ENCODE measurements at regions of chr13 and their contacts with region 1.

Region 1: GRCh38 chr13:48769107-48769704 is 115.5 kb downstream of the CYSLTR2 start:
- DNase-seq: peak; percentile 82
- ATAC-seq: peak; percentile 97
- H3K4me3 ChIP-seq: no peak overlapping the region
- H3K27ac ChIP-seq: no peak overlapping the region
- H3K4me1 ChIP-seq: no peaks in the 10 kb centered on the region
- H3K27me3 ChIP-seq: no peaks in the 10 kb centered on the region
- CTCF ChIP-seq: peak; percentile 98
- EP300 ChIP-seq: no peak
- POLR2A ChIP-seq: no peak
- RAD21 ChIP-seq: peak; percentile 96

Region 2: DNA sequence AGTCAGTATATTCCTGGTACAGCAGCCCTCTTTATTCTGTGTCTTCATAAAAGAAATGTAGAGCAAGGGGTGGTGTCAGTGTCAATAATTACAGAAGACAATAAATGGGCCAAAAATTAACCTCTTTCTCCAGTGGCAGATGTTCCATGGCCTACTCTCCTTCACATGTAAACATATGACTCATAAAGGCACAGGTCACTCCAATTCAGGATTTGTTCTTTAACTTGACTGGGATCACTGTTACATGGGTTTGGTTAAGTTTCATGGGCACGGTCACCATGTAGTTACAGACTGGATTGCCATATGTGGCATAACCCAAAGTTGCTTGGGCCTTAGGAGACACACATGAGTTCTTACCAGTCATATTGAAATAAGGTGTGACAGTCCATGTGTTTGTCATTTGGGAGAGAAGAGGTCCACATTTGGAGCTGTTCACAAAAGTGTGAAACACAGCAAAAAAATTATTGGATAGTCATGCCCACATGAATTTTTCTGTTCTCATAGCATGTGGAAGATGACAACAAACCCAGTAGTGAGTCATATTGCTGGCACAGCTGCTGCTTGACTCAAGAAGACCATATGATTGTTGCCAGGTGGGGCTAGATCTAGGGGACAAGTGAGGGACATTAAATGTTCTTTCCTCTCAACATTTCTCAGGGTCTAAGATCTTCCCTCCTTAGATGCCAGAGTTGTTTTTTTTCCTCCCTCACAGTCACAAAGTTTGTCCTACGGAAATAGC is 1804.2 kb before region 1 on chr13:
- CTCF ChIA-PET with region 1: no interaction called
- POLR2A ChIA-PET with region 1: no interaction called
- in situ Hi-C with region 1: no loop called
- intact Hi-C with region 1: loop called (anchors 5 kb)
- DNase-seq: no peak
- ATAC-seq: no peak
- H3K4me3 ChIP-seq: no peak overlapping the region
- H3K27ac ChIP-seq: no peak overlapping the region
- H3K4me1 ChIP-seq: no peaks in the 10 kb centered on the region
- H3K27me3 ChIP-seq: no peaks in the 10 kb centered on the region
- CTCF ChIP-seq: no peak
- EP300 ChIP-seq: no peak
- POLR2A ChIP-seq: no peak
- RAD21 ChIP-seq: no peak

Region 3: GRCh38 chr13:48303359-48304142 is 465.7 kb before region 1 on chr13 and contains the start of gene RB1:
- CTCF ChIA-PET with region 1: no interaction called
- POLR2A ChIA-PET with region 1: no interaction called
- in situ Hi-C with region 1: loop called (anchors 25 kb)
- intact Hi-C with region 1: no loop called
- DNase-seq: peak; percentile 80
- ATAC-seq: peak; percentile 92
- H3K4me3 ChIP-seq: peak within 1 kb of the TSS; percentile 79 to 91 (median 91)
- H3K27ac ChIP-seq: peak within 1 kb of the TSS; percentile 94
- H3K4me1 ChIP-seq: peaks cover 20% of the 10 kb centered on the region
- H3K27me3 ChIP-seq: no peaks in the 10 kb centered on the region; a peak in 1 of 5 replicates
- CTCF ChIP-seq: 0 out of 2 replicates have a peak, but pooled peaks have one; percentile 2
- EP300 ChIP-seq: 0 out of 4 replicates have a peak, but pooled peaks of 1 of the 2 experiments have one; percentile 24
- POLR2A ChIP-seq: peak; percentile 73 to 82
- RAD21 ChIP-seq: peak; percentile 13
- total RNA-seq, gene RB1: 23.7 and 35.7 TPM in 2 replicates

Region 4: DNA sequence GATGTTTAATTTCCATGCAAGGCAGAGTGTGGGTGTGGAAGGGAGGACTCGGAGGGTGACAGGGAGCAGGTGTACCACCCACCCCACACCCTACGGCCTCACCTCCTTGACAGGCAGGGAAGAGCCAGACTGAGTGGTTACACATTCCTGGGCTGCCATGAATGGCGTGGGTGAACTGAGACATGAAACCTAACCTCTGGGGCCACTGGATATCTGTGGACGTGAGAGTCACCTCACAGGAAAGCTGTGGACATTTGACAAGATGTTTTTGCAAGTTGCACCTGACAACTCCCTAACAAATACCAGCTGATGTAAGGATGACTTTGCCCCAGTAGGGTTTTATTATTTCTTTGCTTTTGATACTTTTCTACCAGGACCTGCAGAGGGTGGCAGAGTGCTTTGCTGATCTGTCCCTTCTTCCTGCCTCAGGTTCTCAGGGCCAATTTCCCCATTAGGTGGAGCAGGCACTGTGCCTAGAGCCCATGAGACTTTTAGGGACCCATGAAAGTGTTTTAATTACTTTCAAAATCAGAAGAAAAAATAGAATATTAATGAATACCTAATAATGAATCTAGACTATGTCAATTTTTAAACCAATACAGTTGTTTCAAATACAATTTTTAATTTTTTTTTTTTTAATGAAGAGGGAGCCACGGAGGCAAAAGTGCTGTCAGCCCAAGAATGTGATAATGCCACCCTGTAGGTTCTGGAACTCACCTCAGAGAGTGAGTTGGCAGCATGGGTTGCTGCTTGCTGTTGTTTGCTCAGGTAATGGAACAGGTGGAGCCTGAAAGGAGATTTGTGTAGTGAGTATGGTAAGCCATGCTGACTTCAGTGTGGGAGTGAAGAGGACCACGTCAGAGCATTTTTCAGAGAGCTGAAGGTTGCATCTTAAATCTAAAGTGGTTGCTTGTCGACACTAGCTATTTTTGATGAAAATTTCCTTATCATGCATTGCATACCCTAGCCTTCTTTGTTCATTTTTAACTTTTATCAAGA is 173.5 kb before region 1 on chr13:
- CTCF ChIA-PET with region 1: interaction called, 144 read pairs
- POLR2A ChIA-PET with region 1: no interaction called
- in situ Hi-C with region 1: loop called (anchors 5 kb)
- intact Hi-C with region 1: loop called (anchors 1 kb)
- DNase-seq: peak; percentile 79
- ATAC-seq: peak; percentile 94
- H3K4me3 ChIP-seq: no peak overlapping the region
- H3K27ac ChIP-seq: no peak overlapping the region
- H3K4me1 ChIP-seq: peaks cover 56% of the 10 kb centered on the region
- H3K27me3 ChIP-seq: no peaks in the 10 kb centered on the region
- CTCF ChIP-seq: peak; percentile 87
- EP300 ChIP-seq: no peak
- POLR2A ChIP-seq: no peak
- RAD21 ChIP-seq: peak; percentile 84

Region 5: DNA sequence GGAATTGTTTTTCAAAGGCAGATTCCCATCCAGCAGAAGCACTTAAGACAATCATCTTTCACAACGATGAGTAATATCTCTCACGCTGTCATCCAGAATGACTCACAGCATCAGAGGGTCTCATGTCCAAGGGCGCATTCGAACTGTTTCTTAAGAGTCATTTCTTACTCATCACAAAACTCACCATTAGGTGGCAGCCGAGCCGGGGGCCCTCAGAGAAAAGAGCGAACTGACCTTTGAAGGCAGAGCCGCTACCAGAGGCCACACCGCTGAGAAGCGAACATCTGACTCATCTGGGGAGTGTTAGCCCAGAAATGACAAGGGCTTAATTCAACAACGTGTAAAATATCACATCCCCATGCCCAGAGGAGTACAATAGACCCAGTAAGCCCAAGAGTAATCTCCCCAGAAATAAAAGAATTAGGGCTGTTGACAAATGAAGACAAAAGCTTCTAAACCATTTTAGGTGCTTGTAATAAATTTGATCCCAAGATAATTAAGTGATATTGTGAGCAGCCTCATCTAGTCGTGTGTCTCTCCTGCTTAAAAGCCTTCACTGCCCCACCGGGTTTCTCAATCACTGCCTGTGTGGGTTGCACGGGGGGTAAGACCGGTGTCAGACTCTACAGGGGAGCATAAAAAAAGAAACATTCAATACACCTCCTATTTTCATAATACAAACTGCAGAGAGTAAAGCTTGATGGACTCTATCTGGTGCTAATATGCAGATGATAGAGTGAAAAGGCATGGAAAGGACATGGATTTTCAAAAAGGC is 19.3 kb before region 1 on chr13:
- CTCF ChIA-PET with region 1: interaction called, 27 read pairs
- POLR2A ChIA-PET with region 1: no interaction called
- in situ Hi-C with region 1: no loop called
- intact Hi-C with region 1: loop called (anchors 1 kb)
- DNase-seq: peak; percentile 76
- ATAC-seq: peak; percentile 97
- H3K4me3 ChIP-seq: no peak overlapping the region
- H3K27ac ChIP-seq: no peak overlapping the region
- H3K4me1 ChIP-seq: peaks cover 11% of the 10 kb centered on the region
- H3K27me3 ChIP-seq: no peaks in the 10 kb centered on the region
- CTCF ChIP-seq: peak; percentile 72
- EP300 ChIP-seq: no peak
- POLR2A ChIP-seq: no peak
- RAD21 ChIP-seq: no peak

Measured in HepG2 (cell line).